Activated T-helper 2 cell treated with anti-CD3 and anti-CD28 coated beads, Interferon-gamma antibody, Interleukin-2, Interleukin-4, amounts not matched to agents 10 μg/mL and 5 μg/mL and 100 μg/mL, durations not matched to agents 14 hours and 24 hours and 36 hours (primary cell): ENCODE measurements at regions of chr16 and their contacts with region 1.

Region 1: DNA sequence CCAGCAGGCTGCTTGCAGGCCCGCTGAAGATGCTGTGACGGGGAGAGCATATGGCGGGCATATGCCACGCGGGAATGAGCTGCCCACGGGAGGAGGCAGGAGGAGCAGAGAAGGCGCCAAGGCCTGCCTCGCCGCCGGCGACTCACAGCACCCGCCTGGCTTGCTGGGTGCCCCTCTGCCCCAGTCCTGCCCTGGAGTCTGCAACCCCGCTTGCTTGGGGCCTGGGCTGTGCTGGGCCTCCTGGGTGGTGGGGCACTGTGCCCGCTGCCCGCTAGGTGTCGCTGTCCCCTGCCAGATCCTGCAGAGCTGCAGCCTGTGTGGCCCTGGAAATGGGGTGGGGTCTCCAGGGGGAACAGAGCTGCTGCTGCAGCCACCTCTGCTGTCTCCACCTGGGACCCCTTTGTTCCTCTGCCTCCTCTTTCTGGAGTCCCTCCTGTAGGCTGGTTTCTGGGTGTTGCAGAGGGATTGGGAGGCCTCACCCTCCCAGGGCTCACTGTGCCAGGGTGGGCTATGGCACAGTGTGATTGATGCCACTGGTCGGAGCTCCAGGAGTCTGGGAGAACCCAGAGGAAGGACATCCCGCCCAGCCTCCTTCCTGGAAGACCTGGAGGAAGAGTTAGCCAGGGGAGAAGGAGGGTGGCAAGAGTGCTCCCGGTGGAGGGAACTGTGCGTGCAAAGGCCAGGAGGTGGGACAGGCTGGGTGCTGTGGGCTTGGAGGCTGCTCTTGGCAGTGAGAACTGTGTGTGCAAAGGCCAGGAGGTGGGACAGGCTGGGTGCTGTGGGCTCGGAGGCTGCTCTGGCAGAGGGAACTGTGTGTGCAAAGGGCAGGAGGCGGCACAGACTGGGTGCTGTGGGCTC is 141.0 kb upstream of the CIBAR2 start:
- DNase-seq: peak; percentile 49
- H3K4me3 Mint-ChIP-seq: no peak overlapping the region
- H3K27ac Mint-ChIP-seq: no peak overlapping the region
- H3K4me1 Mint-ChIP-seq: no peaks in the 10 kb centered on the region
- H3K27me3 Mint-ChIP-seq: peaks cover 2% of the 10 kb centered on the region

Region 2: DNA sequence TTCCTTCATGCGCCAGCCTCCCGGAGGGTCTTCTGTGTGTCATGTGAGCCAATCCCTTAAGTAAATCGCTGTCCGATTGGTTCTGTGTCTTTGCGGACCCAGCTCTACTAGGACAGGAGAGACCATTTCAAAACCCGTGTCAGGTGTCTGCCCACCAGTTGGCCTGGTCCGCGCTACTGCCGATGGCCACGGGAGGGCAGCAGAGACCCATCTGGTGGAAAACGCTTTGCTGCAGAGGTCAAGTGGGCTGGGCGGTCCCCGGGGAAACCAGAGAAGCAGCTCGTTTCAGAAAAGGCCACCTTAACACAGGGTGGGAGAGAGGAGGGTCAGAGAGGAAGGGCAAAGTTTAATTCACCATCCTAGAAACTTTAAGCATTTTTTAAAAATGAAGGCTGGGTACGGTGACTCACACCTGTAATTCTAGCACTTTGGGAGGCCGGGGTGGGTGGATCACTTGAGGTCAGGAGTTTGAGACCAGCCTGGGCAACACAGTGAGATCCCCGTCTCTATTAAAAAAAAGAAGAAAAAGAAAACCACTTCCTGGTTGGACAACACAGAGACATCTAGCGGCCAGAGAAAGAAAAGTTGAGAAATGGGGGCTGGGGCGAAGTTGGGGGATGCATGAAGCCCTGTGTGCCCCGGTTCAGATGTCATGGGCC is 138.3 kb before region 1 on chr16:
- intact Hi-C with region 1: loop called (anchors 10 kb)
- DNase-seq: peak; percentile 65
- H3K4me3 Mint-ChIP-seq: peak overlapping the region; percentile 32
- H3K27ac Mint-ChIP-seq: peak overlapping the region; percentile 64
- H3K4me1 Mint-ChIP-seq: peaks cover 3% of the 10 kb centered on the region
- H3K27me3 Mint-ChIP-seq: no peaks in the 10 kb centered on the region

Region 3: GRCh38 chr16:85220125-85220839 is 33.0 kb before region 1 on chr16:
- intact Hi-C with region 1: no loop called
- DNase-seq: no peak
- H3K4me3 Mint-ChIP-seq: no peak overlapping the region
- H3K27ac Mint-ChIP-seq: no peak overlapping the region
- H3K4me1 Mint-ChIP-seq: no peaks in the 10 kb centered on the region
- H3K27me3 Mint-ChIP-seq: no peaks in the 10 kb centered on the region